GM12878 (cell line): ENCODE measurements at regions of chr14 and their contacts with region 1.

Region 1: DNA sequence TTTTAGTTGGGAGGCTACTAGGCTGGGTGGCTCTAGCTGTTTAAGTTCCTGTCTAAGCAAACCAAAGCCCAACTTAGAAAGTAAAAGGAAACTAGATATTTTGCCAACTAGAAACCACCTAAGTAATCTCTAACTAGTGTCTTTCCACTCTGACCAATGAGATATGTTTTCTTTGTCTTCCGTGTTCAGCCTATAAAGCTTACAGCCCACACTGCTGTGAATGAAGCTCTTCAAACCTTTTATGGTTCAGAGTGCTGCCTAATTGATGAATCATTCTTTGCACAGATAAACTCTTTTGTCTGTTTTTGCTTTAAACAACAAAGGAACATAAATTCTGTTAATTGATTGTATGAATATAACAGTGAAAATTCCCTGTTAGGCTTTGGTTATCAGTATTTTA is 66.1 kb downstream of the FUT8 start:
- DNase-seq: no peak
- ATAC-seq: peak; percentile 74
- H3K4me3 ChIP-seq: no peak overlapping the region
- H3K27ac ChIP-seq: no peak overlapping the region
- H3K4me1 ChIP-seq: peaks cover 20% of the 10 kb centered on the region
- H3K27me3 ChIP-seq: no peaks in the 10 kb centered on the region
- CTCF ChIP-seq: no peak
- EP300 ChIP-seq: no peak
- POLR2A ChIP-seq: no peak
- RAD21 ChIP-seq: no peak

Region 2: GRCh38 chr14:65222440-65222858 is 256.1 kb before region 1 on chr14:
- CTCF ChIA-PET with region 1: no interaction called
- POLR2A ChIA-PET with region 1: no interaction called
- RAD21 ChIA-PET with region 1: no interaction called
- SMC1A ChIA-PET with region 1: interaction called, 3 read pairs
- in situ Hi-C with region 1: no loop called
- intact Hi-C with region 1: loop called (anchors 10 kb)
- DNase-seq: no peak
- ATAC-seq: peak; percentile 86
- H3K4me3 ChIP-seq: no peak overlapping the region
- H3K27ac ChIP-seq: peak overlapping the region; percentile 20; the same call in 1 of the 2 replicates
- H3K4me1 ChIP-seq: peaks cover 31% of the 10 kb centered on the region
- H3K27me3 ChIP-seq: no peaks in the 10 kb centered on the region
- CTCF ChIP-seq: peak; percentile 84 to 91 (median 84)
- EP300 ChIP-seq: no peak
- POLR2A ChIP-seq: no peak
- RAD21 ChIP-seq: peak; percentile 95

Region 3: GRCh38 chr14:65287264-65288131 is 191.1 kb before region 1 on chr14:
- CTCF ChIA-PET with region 1: no interaction called
- POLR2A ChIA-PET with region 1: no interaction called
- RAD21 ChIA-PET with region 1: interaction called, 5 read pairs
- SMC1A ChIA-PET with region 1: no interaction called
- in situ Hi-C with region 1: no loop called
- intact Hi-C with region 1: loop called (anchors 5 kb)
- DNase-seq: no peak
- ATAC-seq: peak; percentile 77
- H3K4me3 ChIP-seq: peak overlapping the region; percentile 53
- H3K27ac ChIP-seq: peak overlapping the region; percentile 98
- H3K4me1 ChIP-seq: peaks cover 77% of the 10 kb centered on the region
- H3K27me3 ChIP-seq: no peaks in the 10 kb centered on the region
- CTCF ChIP-seq: peak in 2 of 3 experiments; percentile 2 to 6; a peak in 1 of 6 replicates
- EP300 ChIP-seq: peak; percentile 51 to 55; a peak in 2 of 4 replicates
- POLR2A ChIP-seq: peak; percentile 75
- RAD21 ChIP-seq: no peak; the same call in 1 of the 2 replicates

Region 4: DNA sequence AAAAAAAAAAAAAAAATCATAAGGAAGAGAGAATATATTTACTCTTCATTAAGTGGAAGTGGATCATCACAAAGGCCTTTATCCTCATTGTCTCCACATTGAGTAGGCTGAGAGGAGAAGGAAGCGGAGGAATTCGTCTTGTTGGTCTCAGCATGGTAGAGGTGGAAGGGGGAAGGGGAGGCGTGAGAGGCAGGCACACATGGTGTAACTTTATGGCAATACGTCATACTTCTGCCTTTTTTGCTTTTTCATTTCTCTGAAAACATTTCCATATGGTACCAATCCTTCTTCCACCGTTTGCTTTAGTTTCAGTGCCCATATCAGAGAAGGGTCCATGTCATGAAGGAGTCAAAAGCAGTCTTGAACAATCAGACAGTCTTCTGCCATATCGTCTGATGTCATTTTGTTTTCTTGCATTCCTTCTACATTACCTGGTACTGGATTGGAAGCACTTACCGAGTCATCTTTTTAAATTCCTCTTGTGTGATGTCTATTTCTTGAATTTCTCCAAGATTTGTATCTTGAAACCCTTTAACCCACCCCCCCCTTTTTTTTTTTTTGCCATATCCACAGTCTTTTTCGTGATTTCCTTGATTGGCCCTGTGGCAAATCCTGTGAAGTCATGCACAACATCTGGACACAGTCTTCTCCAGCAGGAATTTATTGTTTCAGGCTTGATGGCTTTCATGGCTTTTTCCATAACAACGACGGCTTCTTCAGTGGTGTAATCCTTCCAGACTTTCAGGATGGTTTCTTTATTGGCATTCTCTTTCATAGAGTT is 57.2 kb before region 1 on chr14:
- CTCF ChIA-PET with region 1: interaction called, 3 read pairs
- POLR2A ChIA-PET with region 1: no interaction called
- RAD21 ChIA-PET with region 1: interaction called, 16 read pairs
- SMC1A ChIA-PET with region 1: interaction called, 12 read pairs
- in situ Hi-C with region 1: no loop called
- intact Hi-C with region 1: loop called (anchors 5 kb)
- DNase-seq: no peak
- ATAC-seq: no peak
- H3K4me3 ChIP-seq: no peak overlapping the region
- H3K27ac ChIP-seq: no peak overlapping the region
- H3K4me1 ChIP-seq: 0 out of 2 replicates have a peak, but pooled peaks cover 3% of the 10 kb centered on the region
- H3K27me3 ChIP-seq: no peaks in the 10 kb centered on the region
- CTCF ChIP-seq: no peak
- EP300 ChIP-seq: no peak
- POLR2A ChIP-seq: no peak
- RAD21 ChIP-seq: no peak

Region 5: GRCh38 chr14:65462411-65462810 is 16.2 kb before region 1 on chr14:
- CTCF ChIA-PET with region 1: interaction called, 22 read pairs
- POLR2A ChIA-PET with region 1: interaction called, 4 read pairs
- RAD21 ChIA-PET with region 1: interaction called, 9 read pairs
- SMC1A ChIA-PET with region 1: interaction called, 40 read pairs
- in situ Hi-C with region 1: no loop called
- intact Hi-C with region 1: no loop called
- DNase-seq: peak; percentile 85
- ATAC-seq: peak; percentile 91
- H3K4me3 ChIP-seq: no peak overlapping the region
- H3K27ac ChIP-seq: peak overlapping the region; percentile 82
- H3K4me1 ChIP-seq: peaks cover 24% of the 10 kb centered on the region
- H3K27me3 ChIP-seq: no peaks in the 10 kb centered on the region
- CTCF ChIP-seq: no peak
- EP300 ChIP-seq: peak; percentile 56 to 67; a peak in 3 of 4 replicates
- POLR2A ChIP-seq: no peak
- RAD21 ChIP-seq: peak; percentile 28; the same call in 1 of the 2 replicates

Region 6: DNA sequence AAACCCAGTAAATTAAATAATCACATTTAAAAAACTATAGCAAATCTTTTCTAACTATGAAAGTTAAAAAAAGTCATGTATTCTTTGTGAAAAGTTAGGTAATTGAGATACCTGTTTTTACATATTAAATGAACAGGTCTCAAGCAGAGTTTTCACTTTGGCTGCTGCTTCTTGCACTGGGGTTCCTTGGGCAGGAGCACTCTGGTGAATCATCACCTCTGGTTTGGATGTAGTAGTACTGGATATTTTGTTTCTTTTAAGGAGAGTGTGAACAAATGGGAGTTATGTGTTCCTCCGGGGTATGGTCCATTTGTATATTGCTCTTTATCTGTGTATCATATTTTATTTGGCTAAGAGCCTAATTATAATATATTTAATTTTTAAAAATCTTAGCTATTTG is 16.6 kb after region 1 on chr14:
- CTCF ChIA-PET with region 1: interaction called, 6 read pairs
- POLR2A ChIA-PET with region 1: interaction called, 12 read pairs
- RAD21 ChIA-PET with region 1: interaction called, 3 read pairs
- SMC1A ChIA-PET with region 1: interaction called, 14 read pairs
- in situ Hi-C with region 1: no loop called
- intact Hi-C with region 1: no loop called
- DNase-seq: no peak
- ATAC-seq: no peak
- H3K4me3 ChIP-seq: no peak overlapping the region
- H3K27ac ChIP-seq: no peak overlapping the region
- H3K4me1 ChIP-seq: no peaks in the 10 kb centered on the region; the same call in 1 of the 2 replicates
- H3K27me3 ChIP-seq: no peaks in the 10 kb centered on the region
- CTCF ChIP-seq: no peak
- EP300 ChIP-seq: no peak
- POLR2A ChIP-seq: no peak
- RAD21 ChIP-seq: no peak

Region 7: GRCh38 chr14:65502676-65503124 is 24.1 kb after region 1 on chr14:
- CTCF ChIA-PET with region 1: interaction called, 18 read pairs
- POLR2A ChIA-PET with region 1: no interaction called
- RAD21 ChIA-PET with region 1: interaction called, 7 read pairs
- SMC1A ChIA-PET with region 1: interaction called, 11 read pairs
- in situ Hi-C with region 1: no loop called
- intact Hi-C with region 1: no loop called
- DNase-seq: peak; percentile 62
- ATAC-seq: peak; percentile 79
- H3K4me3 ChIP-seq: no peak overlapping the region
- H3K27ac ChIP-seq: peak overlapping the region; percentile 65
- H3K4me1 ChIP-seq: peaks cover 21% of the 10 kb centered on the region; the same call in 1 of the 2 replicates
- H3K27me3 ChIP-seq: no peaks in the 10 kb centered on the region
- CTCF ChIP-seq: no peak
- EP300 ChIP-seq: peak; percentile 25 to 45; a peak in 1 of 4 replicates
- POLR2A ChIP-seq: no peak
- RAD21 ChIP-seq: no peak

Region 8: DNA sequence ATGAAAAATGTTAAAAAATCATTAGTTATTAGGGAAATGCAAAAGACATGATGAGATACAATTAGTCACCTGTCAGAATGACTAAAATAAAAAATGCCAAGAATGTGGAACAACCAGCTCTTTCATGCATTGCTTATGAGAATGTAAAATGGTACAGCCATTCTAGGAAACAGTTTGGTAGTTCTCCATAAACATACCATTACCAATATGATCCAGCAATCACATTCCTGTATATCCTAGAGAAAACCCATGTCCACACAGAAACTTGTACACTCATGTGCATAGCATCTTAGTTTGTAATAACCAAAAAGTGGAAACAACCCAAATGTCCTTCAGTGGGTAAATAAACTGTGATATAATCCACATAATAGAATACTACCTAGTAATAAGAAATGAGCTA is 179.6 kb after region 1 on chr14:
- CTCF ChIA-PET with region 1: no interaction called
- POLR2A ChIA-PET with region 1: no interaction called
- RAD21 ChIA-PET with region 1: no interaction called
- SMC1A ChIA-PET with region 1: no interaction called
- in situ Hi-C with region 1: no loop called
- intact Hi-C with region 1: no loop called
- DNase-seq: no peak
- ATAC-seq: no peak
- H3K4me3 ChIP-seq: no peak overlapping the region
- H3K27ac ChIP-seq: no peak overlapping the region
- H3K4me1 ChIP-seq: no peaks in the 10 kb centered on the region
- H3K27me3 ChIP-seq: no peaks in the 10 kb centered on the region
- CTCF ChIP-seq: no peak
- EP300 ChIP-seq: no peak
- POLR2A ChIP-seq: no peak
- RAD21 ChIP-seq: no peak

Region 9: GRCh38 chr14:65961004-65961403 is 482.4 kb after region 1 on chr14:
- CTCF ChIA-PET with region 1: no interaction called
- POLR2A ChIA-PET with region 1: no interaction called
- RAD21 ChIA-PET with region 1: no interaction called
- SMC1A ChIA-PET with region 1: no interaction called
- in situ Hi-C with region 1: no loop called
- intact Hi-C with region 1: no loop called
- DNase-seq: no peak
- ATAC-seq: peak; percentile 90
- H3K4me3 ChIP-seq: no peak overlapping the region
- H3K27ac ChIP-seq: no peak overlapping the region
- H3K4me1 ChIP-seq: no peaks in the 10 kb centered on the region
- H3K27me3 ChIP-seq: peaks cover 2 to 4% of the 10 kb centered on the region in 2 experiments; a peak in 2 of 4 replicates
- CTCF ChIP-seq: peak; percentile 48 to 83 (median 74)
- EP300 ChIP-seq: no peak
- POLR2A ChIP-seq: no peak
- RAD21 ChIP-seq: peak; percentile 51